ENCODE measurements at regions of chr7 and their contacts with region 1.

Region 1: GRCh38 chr7:151304856-151305255 is 36.8 kb upstream of the NUB1 start:
- DNase-seq: no peak
- ATAC-seq: peak; percentile 4
- H3K4me3 ChIP-seq: no peak overlapping the region
- H3K27ac ChIP-seq: no peak overlapping the region
- H3K4me1 ChIP-seq: peaks cover 7 to 9% of the 10 kb centered on the region in 2 donors
- H3K27me3 ChIP-seq: peaks cover 0 to 45% of the 10 kb centered on the region in 2 donors
- CTCF ChIP-seq: no peak

Region 2: DNA sequence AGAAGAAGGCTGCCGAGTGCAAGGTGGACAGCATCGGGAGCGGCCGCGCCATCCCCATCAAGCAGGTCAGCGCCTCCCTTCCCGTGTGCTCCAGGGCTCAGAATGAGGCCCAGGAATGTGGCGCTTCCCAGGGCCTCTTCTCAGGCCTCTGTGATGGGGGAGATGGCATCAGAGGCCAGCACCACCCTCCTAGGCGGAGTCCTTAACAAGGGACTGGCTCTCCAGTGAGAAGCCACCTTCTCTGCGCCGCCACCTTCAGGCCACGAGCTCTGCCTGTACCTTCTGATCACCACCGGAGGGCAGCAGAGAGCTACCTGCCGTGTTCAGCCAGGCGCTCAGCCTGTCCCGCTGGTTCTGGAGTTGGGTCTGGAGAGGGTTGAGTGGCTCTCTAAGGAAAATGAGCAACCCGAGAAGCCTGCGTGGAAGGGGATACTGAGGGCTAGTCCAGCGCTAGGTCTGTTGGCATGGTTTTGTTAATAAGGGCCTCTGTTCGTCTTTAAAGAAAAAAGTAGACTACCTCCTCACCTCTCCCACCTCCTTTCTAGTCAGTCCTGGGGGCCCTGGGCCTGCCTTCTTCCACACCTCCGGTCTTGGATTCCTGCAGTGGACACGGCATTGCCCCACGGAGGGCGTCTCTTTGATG is 180.9 kb before region 1 on chr7:
- intact Hi-C with region 1: loop called in 1 of 2 experiments (anchors 5 kb)
- DNase-seq: peak; percentile 75 to 93 (median 90)
- ATAC-seq: peak; percentile 95
- H3K4me3 ChIP-seq: no peak overlapping the region
- H3K27ac ChIP-seq: no peak overlapping the region
- H3K4me1 ChIP-seq: peaks cover 10 to 14% of the 10 kb centered on the region in 2 donors
- H3K27me3 ChIP-seq: no peaks in the 10 kb centered on the region
- CTCF ChIP-seq: peak; percentile 96

Region 3: DNA sequence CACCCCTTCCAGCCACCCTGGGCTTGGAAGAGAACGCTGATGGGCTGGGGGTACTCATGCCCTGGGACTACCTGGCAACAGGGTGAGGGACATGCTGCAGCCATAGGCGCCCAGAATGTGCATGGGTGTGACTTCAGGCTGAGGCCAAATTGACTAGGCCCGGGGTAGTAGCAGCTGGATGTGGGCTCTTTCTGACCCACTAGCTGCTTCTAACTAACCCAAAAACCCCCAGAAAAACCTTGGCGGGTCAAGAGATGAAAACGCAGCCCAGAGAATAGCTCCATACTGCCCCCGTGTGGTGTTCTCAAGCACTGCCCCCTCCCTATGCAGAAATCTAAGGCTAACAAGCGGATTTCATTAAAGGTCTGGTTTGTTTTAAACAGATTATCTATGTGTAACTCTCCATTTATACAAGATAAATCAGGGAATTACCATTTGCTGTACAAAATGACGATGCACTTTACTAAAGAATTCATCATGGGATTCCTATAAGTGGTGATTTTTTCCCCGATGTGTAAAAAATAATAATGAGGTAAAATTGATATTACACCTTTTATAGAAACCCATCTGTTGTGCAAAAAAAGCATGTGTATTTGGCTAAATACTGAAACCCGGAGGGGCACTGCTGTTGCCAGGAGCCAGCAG is 60.5 kb before region 1 on chr7:
- intact Hi-C with region 1: loop called in 1 of 2 experiments (anchors 10 kb)
- DNase-seq: peak in 1 of 4 donors; percentile 62
- ATAC-seq: peak; percentile 41
- H3K4me3 ChIP-seq: peak overlapping the region in 1 of 2 donors; percentile 14
- H3K27ac ChIP-seq: no peak overlapping the region
- H3K4me1 ChIP-seq: peaks cover 14 to 68% of the 10 kb centered on the region in 2 donors
- H3K27me3 ChIP-seq: peaks cover 15 to 54% of the 10 kb centered on the region in 2 donors
- CTCF ChIP-seq: peak; percentile 83 to 86

Region 4: DNA sequence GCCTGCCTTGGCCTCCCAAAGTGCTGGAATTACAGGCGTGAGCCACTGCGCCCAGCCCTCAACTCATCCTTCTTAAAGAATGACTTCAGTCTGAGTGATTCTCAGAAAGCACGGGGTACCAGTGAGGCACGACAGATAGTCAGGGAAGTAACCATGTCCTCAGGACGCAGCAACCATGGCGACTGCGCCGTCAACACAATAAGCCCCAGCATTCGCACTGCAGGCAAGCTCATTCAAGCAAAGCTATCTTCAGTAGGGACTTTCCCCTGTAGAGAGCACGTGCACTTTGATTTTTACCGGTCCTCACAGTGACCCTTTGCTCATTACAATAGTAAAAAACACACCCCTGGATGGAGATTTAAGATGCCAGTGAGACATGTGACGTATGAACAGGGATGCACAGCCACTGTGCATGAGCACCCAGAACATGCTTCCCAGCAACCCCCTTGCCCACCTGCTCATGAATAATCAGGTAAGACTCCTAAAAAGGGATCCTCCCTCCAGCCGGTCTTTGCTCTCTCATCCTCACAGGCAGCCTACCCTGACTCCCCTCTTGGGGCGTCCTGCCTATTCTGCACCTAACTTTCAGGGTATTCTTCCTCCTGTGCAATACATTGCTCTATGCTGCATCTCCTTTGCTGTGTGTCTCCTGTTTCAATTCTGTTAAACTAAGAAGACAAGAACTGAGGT is 95.9 kb after region 1 on chr7:
- intact Hi-C with region 1: no loop called
- DNase-seq: peak in 1 of 4 donors; percentile 46
- ATAC-seq: no peak
- H3K4me3 ChIP-seq: no peak overlapping the region
- H3K27ac ChIP-seq: no peak overlapping the region
- H3K4me1 ChIP-seq: peaks cover 0 to 7% of the 10 kb centered on the region in 2 donors
- H3K27me3 ChIP-seq: peaks cover 0 to 24% of the 10 kb centered on the region in 2 donors
- CTCF ChIP-seq: no peak